CD4-positive, alpha-beta memory T cell (primary cell): ENCODE measurements at regions of chr12 and their contacts with region 1.

Region 1: GRCh38 chr12:4538207-4539160 is at the start of gene RAD51AP1:
- DNase-seq: peak; percentile 96 to 98 (median 98)
- H3K4me3 ChIP-seq: peak within 1 kb of the TSS; percentile 73 to 90
- H3K4me3 Mint-ChIP-seq: peak within 1 kb of the TSS; percentile 93 to 99 (median 96)
- H3K27ac ChIP-seq: peak within 1 kb of the TSS; percentile 79
- H3K27ac Mint-ChIP-seq: peak within 1 kb of the TSS; percentile 94 to 99 (median 98)
- H3K4me1 ChIP-seq: peaks cover 21% of the 10 kb centered on the region
- H3K4me1 Mint-ChIP-seq: peaks cover 13 to 34% (median 26%) of the 10 kb centered on the region in 4 donors
- H3K27me3 ChIP-seq: no peaks in the 10 kb centered on the region
- H3K27me3 Mint-ChIP-seq: no peaks in the 10 kb centered on the region
- total RNA-seq, gene RAD51AP1: 0.58 to 1.5 TPM

Region 2: DNA sequence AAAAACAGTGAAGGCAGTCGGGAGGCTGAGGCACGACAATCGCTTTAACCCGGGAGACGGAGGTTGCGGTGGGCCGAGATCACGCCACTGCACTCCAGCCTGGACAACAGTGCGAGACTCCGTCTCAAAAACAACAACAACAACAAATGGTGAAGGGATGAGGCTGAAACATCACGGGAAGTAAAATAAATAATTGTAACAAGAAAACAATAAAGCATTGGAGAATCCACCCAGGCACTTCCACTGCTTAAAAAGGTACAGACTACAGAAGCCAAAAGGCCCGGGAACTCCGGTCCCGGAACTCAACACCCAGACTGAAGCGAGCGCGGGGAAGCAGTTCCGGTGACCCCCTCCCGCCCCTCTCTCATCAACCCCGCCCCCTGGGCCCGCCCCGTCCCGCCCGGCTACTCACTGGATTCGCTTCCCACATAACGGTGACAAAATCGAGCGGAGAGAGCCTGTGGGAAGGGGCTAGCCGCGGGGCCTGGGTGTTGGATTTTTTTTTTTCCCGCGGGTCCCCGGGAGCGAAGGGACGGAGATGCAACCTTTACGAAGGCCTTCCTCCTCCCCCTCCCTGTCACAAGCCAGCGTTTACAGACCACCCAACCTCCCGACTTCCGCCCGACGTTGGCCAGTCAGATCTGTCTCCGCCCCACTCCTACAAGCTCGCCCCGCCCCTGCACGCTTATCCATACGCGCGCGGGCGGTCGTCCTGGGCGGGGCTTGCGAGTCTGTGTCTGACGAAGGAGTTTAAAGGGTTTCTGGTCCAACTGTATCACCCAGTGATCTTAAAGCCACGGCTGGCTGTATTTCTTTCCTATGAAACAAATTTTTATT is 665.5 kb before region 1 on chr12 and contains the start of gene PARP11:
- CTCF ChIA-PET with region 1: no interaction called
- POLR2A ChIA-PET with region 1: interaction called, 3 read pairs
- intact Hi-C with region 1: loop called (anchors 5 kb)
- DNase-seq: peak; percentile 97 to 98 (median 97)
- H3K4me3 ChIP-seq: peak within 1 kb of the TSS; percentile 53 to 87
- H3K4me3 Mint-ChIP-seq: peak within 1 kb of the TSS; percentile 95 to 99 (median 98)
- H3K27ac ChIP-seq: peak within 1 kb of the TSS; percentile 95
- H3K27ac Mint-ChIP-seq: peak within 1 kb of the TSS; percentile 95 to 100 (median 99)
- H3K4me1 ChIP-seq: peaks cover 50% of the 10 kb centered on the region
- H3K4me1 Mint-ChIP-seq: peaks cover 34 to 57% (median 40%) of the 10 kb centered on the region in 4 donors
- H3K27me3 ChIP-seq: no peaks in the 10 kb centered on the region
- H3K27me3 Mint-ChIP-seq: no peaks in the 10 kb centered on the region
- total RNA-seq, gene PARP11: 36.4 to 39.9 TPM

Region 3: DNA sequence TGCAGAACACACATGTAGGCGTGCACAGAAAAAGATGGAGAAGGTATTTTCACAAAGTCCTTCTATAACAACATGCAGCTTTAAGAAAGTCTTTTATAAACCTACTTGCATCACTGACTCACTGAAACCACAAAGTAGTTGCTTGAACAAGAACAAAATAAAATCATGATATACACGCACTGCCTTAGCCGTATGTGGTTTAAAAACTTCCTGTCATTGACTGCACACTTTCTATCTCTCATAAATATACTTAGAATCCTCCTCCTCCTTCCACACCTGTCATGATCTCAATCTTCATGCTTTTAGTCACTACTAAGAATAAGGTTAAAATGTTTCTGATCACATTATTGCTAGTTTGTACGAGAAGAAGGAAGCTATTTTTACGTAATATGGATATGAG is 31.6 kb before region 1 on chr12:
- CTCF ChIA-PET with region 1: no interaction called
- POLR2A ChIA-PET with region 1: interaction called, 8 read pairs
- intact Hi-C with region 1: loop called (anchors 2 kb)
- DNase-seq: peak; percentile 61 to 80 (median 70)
- H3K4me3 ChIP-seq: no peak overlapping the region
- H3K4me3 Mint-ChIP-seq: peak overlapping the region; percentile 43 to 83 (median 60)
- H3K27ac ChIP-seq: peak overlapping the region; percentile 44
- H3K27ac Mint-ChIP-seq: peak overlapping the region; percentile 51 to 94 (median 92)
- H3K4me1 ChIP-seq: peaks cover 23% of the 10 kb centered on the region
- H3K4me1 Mint-ChIP-seq: peaks cover 16 to 27% (median 22%) of the 10 kb centered on the region in 4 donors
- H3K27me3 ChIP-seq: no peaks in the 10 kb centered on the region
- H3K27me3 Mint-ChIP-seq: no peaks in the 10 kb centered on the region

Region 4: GRCh38 chr12:4567073-4567881 is 28.8 kb after region 1 on chr12:
- CTCF ChIA-PET with region 1: no interaction called
- POLR2A ChIA-PET with region 1: no interaction called
- intact Hi-C with region 1: no loop called
- DNase-seq: no peak
- H3K4me3 ChIP-seq: no peak overlapping the region
- H3K4me3 Mint-ChIP-seq: no peak overlapping the region
- H3K27ac ChIP-seq: no peak overlapping the region
- H3K27ac Mint-ChIP-seq: no peak overlapping the region
- H3K4me1 ChIP-seq: no peaks in the 10 kb centered on the region
- H3K4me1 Mint-ChIP-seq: peaks cover 0 to 5% (median 2%) of the 10 kb centered on the region in 4 donors
- H3K27me3 ChIP-seq: no peaks in the 10 kb centered on the region
- H3K27me3 Mint-ChIP-seq: peaks cover 0 to 6% of the 10 kb centered on the region in 2 donors